ENCODE measurements at regions of chr1 and their contacts with region 1.

Region 1: DNA sequence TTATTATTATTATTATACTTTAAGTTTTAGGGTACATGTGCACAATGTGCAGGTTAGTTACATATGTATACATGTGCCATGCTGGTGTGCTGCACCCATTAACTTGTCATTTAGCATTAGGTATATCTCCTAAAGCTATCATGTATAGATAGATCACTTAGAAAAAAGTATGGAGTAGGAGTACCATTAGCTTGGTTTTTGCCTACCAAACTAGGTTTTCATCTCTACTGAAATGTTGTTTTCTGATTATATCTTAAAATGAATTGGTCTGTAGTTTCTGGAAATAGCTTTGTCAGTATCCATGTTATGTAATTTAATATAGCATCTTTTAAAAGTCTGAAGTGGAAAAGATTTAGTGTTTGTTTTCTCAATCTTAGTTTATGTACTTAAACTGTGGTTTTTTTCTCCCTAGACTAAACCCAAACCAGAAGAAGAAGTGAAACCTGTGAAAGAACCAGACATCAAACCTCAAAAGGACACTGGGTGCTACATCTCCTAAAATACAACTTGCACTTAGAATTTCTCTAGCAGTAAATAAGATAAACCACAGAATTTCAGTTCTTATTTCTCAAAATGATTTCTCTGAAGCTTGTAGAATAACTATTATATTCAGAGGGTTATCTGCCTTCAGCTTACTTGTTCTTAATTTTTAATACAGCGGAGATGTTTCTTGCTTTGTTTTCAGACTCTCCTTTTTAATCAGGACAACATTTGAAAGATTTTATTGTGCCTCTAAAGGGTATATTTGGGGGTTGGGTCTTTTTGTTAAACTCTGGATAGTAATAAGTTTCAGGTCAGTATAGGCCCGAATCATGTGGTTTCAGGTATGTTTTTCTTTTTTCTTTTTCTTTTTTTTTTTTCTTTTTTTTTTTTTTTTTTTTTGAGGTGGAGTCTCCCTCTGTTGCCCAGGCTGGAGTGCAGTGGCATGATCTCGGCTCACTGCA is 4.5 kb upstream of the FAM177B start:
- DNase-seq: no peak
- H3K4me3 ChIP-seq: no peak overlapping the region
- H3K27ac ChIP-seq: no peak overlapping the region
- H3K4me1 ChIP-seq: no peaks in the 10 kb centered on the region
- H3K27me3 ChIP-seq: no peaks in the 10 kb centered on the region
- CTCF ChIP-seq: no peak

Region 2: DNA sequence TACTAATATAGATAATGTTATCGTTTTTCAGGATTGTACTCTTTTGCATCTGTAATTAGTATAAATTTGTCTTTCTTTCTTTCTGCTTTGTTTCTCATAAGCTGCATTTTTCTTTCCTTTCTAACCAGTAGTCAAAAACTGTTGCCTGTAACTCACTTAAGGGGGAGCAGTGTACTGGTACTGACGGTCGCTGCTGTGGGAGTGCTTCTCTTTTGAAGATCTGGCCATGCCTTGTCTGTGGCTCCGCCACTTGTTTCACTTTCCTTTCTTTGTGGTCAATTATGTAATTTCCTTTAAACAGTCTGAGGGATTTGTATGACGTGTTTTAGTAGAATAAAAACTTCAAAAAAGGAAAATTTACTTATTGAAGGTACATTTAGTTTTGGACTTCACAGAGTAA is 77.6 kb before region 1 on chr1:
- intact Hi-C with region 1: loop called (anchors 10 kb)
- DNase-seq: peak in 1 of 2 donors; percentile 29
- H3K4me3 ChIP-seq: no peak overlapping the region
- H3K27ac ChIP-seq: no peak overlapping the region
- H3K4me1 ChIP-seq: no peaks in the 10 kb centered on the region
- H3K27me3 ChIP-seq: no peaks in the 10 kb centered on the region
- CTCF ChIP-seq: no peak

Region 3: GRCh38 chr1:222706815-222707214 is 25.7 kb before region 1 on chr1:
- intact Hi-C with region 1: no loop called
- DNase-seq: no peak
- H3K4me3 ChIP-seq: no peak overlapping the region
- H3K27ac ChIP-seq: no peak overlapping the region
- H3K4me1 ChIP-seq: peaks cover 0 to 24% (median 15%) of the 10 kb centered on the region in 4 donors
- H3K27me3 ChIP-seq: no peaks in the 10 kb centered on the region
- CTCF ChIP-seq: no peak

Region 4: GRCh38 chr1:223081181-223081994 is 348.9 kb after region 1 on chr1:
- intact Hi-C with region 1: loop called (anchors 5 kb)
- DNase-seq: peak; percentile 56 to 90
- H3K4me3 ChIP-seq: peak overlapping the region; percentile 45 to 48
- H3K27ac ChIP-seq: peak overlapping the region; percentile 62 to 74
- H3K4me1 ChIP-seq: peaks cover 0 to 4% (median under 1%) of the 10 kb centered on the region in 4 donors
- H3K27me3 ChIP-seq: no peaks in the 10 kb centered on the region
- CTCF ChIP-seq: peak; percentile 97 to 98